Transverse colon (tissue), 4 donors: ENCODE measurements at regions of chr19 and their contacts with region 1.

Region 1: GRCh38 chr19:13366529-13367143 is 139.6 kb downstream of the CACNA1A start:
- DNase-seq: no peak
- H3K4me3 ChIP-seq: no peak overlapping the region
- H3K27ac ChIP-seq: no peak overlapping the region
- H3K4me1 ChIP-seq: no peaks in the 10 kb centered on the region
- H3K27me3 ChIP-seq: no peaks in the 10 kb centered on the region
- CTCF ChIP-seq: no peak
- EP300 ChIP-seq: no peak
- POLR2A ChIP-seq: no peak

Region 2: GRCh38 chr19:13401388-13401787 is 34.8 kb after region 1 on chr19:
- in situ Hi-C with region 1: no loop called
- intact Hi-C with region 1: loop called (anchors 1 kb)
- DNase-seq: no peak
- H3K4me3 ChIP-seq: no peak overlapping the region
- H3K27ac ChIP-seq: no peak overlapping the region
- H3K4me1 ChIP-seq: no peaks in the 10 kb centered on the region
- H3K27me3 ChIP-seq: peaks cover 10% of the 10 kb centered on the region
- CTCF ChIP-seq: no peak
- EP300 ChIP-seq: no peak
- POLR2A ChIP-seq: no peak

Region 3: DNA sequence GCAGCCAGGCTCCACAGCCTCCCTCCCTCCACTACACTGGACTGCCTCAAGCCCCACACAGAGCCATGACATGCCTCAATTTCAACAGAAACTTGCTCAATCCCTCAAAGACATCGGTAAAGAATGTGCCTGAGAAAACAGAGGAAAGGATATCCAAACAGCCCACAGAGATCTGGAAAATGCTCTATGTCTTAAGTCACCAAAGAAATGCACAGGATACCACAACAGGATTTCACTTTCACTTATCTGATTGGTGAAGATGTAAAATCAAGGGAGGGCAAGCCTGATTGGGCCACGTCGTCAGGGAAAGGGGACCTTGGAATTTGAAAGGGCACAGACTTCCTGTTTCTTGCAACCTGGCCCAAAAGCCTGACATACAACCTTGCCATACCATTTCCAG is 125.5 kb after region 1 on chr19:
- in situ Hi-C with region 1: no loop called
- intact Hi-C with region 1: no loop called
- DNase-seq: no peak
- H3K4me3 ChIP-seq: no peak overlapping the region
- H3K27ac ChIP-seq: no peak overlapping the region
- H3K4me1 ChIP-seq: no peaks in the 10 kb centered on the region
- H3K27me3 ChIP-seq: peaks cover 9% of the 10 kb centered on the region
- CTCF ChIP-seq: no peak
- EP300 ChIP-seq: no peak
- POLR2A ChIP-seq: no peak

Region 4: DNA sequence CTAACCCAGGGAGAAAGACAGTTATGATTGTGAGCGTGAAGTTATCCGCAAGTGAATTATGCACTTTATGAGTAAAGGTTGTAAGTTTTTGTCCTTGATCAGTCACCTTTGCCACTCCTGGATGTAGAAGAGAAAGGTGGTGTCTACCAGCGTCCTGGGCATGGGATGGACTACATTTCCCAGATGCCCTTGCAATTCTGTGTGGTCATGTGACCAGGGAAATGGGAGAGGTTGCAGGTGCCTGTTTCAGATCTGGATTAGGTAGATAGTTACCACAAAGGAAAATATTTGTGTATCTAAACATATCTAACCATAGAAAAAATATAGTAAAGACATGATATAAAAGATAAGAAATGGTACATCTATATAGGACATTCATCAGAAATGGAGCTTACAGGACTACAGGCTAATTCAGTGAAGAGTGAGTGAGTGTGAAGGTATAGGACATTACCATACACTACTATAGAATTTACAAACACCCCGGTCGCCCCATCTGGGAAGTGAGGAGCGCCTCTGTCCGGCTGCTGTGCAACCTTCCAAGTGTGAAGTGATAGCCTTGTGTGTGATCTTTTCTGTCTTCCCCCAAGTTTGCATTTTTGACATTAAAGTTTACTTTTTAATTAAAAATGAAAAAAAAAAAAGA is 191.2 kb after region 1 on chr19:
- in situ Hi-C with region 1: no loop called
- intact Hi-C with region 1: no loop called
- DNase-seq: peak; percentile 13
- H3K4me3 ChIP-seq: no peak overlapping the region
- H3K27ac ChIP-seq: no peak overlapping the region
- H3K4me1 ChIP-seq: no peaks in the 10 kb centered on the region
- H3K27me3 ChIP-seq: peaks cover 9% of the 10 kb centered on the region
- CTCF ChIP-seq: no peak
- EP300 ChIP-seq: no peak
- POLR2A ChIP-seq: no peak

Region 5: GRCh38 chr19:13883516-13884064 is 517.0 kb after region 1 on chr19:
- in situ Hi-C with region 1: no loop called
- intact Hi-C with region 1: no loop called
- DNase-seq: no peak
- H3K4me3 ChIP-seq: no peak overlapping the region
- H3K27ac ChIP-seq: no peak overlapping the region
- H3K4me1 ChIP-seq: peaks cover 22 to 69% (median 51%) of the 10 kb centered on the region in 4 donors
- H3K27me3 ChIP-seq: no peaks in the 10 kb centered on the region
- CTCF ChIP-seq: peak in 1 of 5 experiments; percentile 25
- EP300 ChIP-seq: no peak
- POLR2A ChIP-seq: no peak